Astrocyte of the cerebellum (primary cell): ENCODE measurements at regions of chr21 and their contacts with region 1.

Region 1: GRCh38 chr21:42737951-42738590 is 84.7 kb downstream of the PDE9A start:
- DNase-seq: no peak
- H3K4me3 ChIP-seq: no peak overlapping the region
- CTCF ChIP-seq: no peak

Region 2: GRCh38 chr21:42614811-42615659 is 123.0 kb before region 1 on chr21:
- in situ Hi-C with region 1: loop called (anchors 10 kb)
- DNase-seq: no peak
- H3K4me3 ChIP-seq: no peak overlapping the region
- CTCF ChIP-seq: no peak

Region 3: GRCh38 chr21:42833439-42833815 is 95.4 kb after region 1 on chr21:
- in situ Hi-C with region 1: no loop called
- DNase-seq: no peak
- H3K4me3 ChIP-seq: no peak overlapping the region
- CTCF ChIP-seq: peak; percentile 17